ENCODE measurements at regions of chr15 and their contacts with region 1.

Region 1: GRCh38 chr15:97903971-97904572 is 56.4 kb upstream of the ARRDC4 start:
- DNase-seq: peak; percentile 89
- H3K4me3 Mint-ChIP-seq: no peak overlapping the region
- H3K27ac Mint-ChIP-seq: no peak overlapping the region
- H3K4me1 Mint-ChIP-seq: no peaks in the 10 kb centered on the region
- H3K27me3 Mint-ChIP-seq: peaks cover 74% of the 10 kb centered on the region
- CTCF ChIP-seq: peak; percentile 64

Region 2: GRCh38 chr15:97890307-97890706 is 13.8 kb before region 1 on chr15:
- CTCF ChIA-PET with region 1: interaction called, 16 read pairs
- intact Hi-C with region 1: no loop called
- DNase-seq: no peak
- H3K4me3 Mint-ChIP-seq: no peak overlapping the region
- H3K27ac Mint-ChIP-seq: no peak overlapping the region
- H3K4me1 Mint-ChIP-seq: no peaks in the 10 kb centered on the region
- H3K27me3 Mint-ChIP-seq: peaks cover 17% of the 10 kb centered on the region
- CTCF ChIP-seq: no peak

Region 3: GRCh38 chr15:98421419-98422129 is 517.5 kb after region 1 on chr15:
- CTCF ChIA-PET with region 1: no interaction called
- intact Hi-C with region 1: loop called (anchors 2 kb)
- DNase-seq: peak; percentile 80
- H3K4me3 Mint-ChIP-seq: no peak overlapping the region
- H3K27ac Mint-ChIP-seq: no peak overlapping the region
- H3K4me1 Mint-ChIP-seq: no peaks in the 10 kb centered on the region
- H3K27me3 Mint-ChIP-seq: peaks cover 73% of the 10 kb centered on the region
- CTCF ChIP-seq: peak; percentile 98